ENCODE measurements at regions of chr2 and their contacts with region 1.

Region 1: GRCh38 chr2:218216674-218217359 is at the start of gene ARPC2:
- DNase-seq: peak; percentile 92 to 97
- ATAC-seq: peak; percentile 95
- total RNA-seq, gene ARPC2: 304 to 347 TPM

Region 2: DNA sequence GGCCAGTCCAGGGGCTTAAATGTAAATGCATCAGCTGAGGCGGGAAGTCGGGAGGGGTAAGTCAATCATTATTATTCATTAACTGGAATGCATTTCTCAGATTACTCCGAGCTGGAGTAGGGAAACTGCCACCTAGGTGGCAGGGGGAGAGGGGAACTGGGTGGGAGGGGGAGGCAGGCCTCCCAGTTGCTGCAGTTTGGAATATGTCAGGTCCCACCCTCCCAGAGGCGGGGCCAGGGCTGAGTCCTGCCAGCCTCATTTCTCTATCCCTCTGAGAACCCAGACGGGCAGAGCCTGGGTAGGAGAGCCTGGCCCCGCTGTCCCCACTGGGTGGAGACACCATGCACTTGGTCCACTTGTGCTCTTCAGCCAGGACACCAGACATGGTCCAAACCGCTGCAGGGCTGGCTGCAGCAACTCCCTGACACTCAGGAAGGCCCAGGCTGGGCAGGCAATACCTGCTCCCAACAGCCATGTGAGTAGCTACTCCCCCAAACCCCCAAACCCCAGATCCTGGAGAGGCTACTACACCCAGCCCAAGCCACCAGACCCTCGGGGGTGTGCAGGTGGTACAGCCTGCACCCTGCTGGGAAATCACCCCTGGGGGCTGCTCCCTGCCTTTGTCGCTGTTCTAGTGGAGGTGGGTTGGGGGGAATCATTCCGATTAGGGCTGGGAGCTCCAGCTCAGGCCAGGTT is 44.1 kb after region 1 on chr2 and contains the start of gene GPBAR1:
- intact Hi-C with region 1: loop called in 1 of 2 experiments (anchors 5 kb)
- DNase-seq: peak; percentile 54 to 60
- ATAC-seq: peak; percentile 4
- total RNA-seq, gene GPBAR1: 1.8 to 3.0 TPM

Region 3: GRCh38 chr2:218332920-218333645 is 116.3 kb after region 1 on chr2:
- intact Hi-C with region 1: no loop called
- DNase-seq: peak in 1 of 2 donors; percentile 49
- ATAC-seq: no peak